ENCODE measurements at regions of chr7 and their contacts with region 1.

Region 1: DNA sequence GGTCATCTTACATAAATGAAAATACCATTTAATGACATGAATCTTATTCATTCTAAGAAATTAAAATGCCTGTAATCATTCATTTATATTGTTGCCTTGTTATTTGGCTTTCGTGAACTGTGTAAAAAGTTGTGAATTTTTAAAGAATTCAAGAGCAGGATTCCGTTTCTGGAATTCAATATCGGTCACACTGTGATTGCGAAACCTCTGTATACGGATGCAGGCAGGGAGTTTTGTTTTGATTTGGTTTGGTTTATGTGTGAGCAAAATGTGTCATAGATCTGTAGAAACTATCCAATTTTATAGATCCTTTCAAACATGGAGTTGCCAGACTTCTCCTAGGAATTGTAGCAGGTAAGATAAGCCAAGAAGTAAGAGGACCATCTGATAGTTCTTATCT is 441.4 kb downstream of the DPP6 start:
- DNase-seq: no peak
- ATAC-seq: no peak
- H3K4me3 ChIP-seq: no peak overlapping the region
- H3K27ac ChIP-seq: no peak overlapping the region
- H3K4me1 ChIP-seq: no peaks in the 10 kb centered on the region
- H3K27me3 ChIP-seq: no peaks in the 10 kb centered on the region
- CTCF ChIP-seq: no peak
- POLR2A ChIP-seq: no peak
- RAD21 ChIP-seq: no peak

Region 2: GRCh38 chr7:153858355-153858754 is 635.2 kb before region 1 on chr7:
- CTCF ChIA-PET with region 1: no interaction called
- POLR2A ChIA-PET with region 1: no interaction called
- dilution Hi-C with region 1: no loop called
- in situ Hi-C with region 1: no loop called
- intact Hi-C with region 1: no loop called
- DNase-seq: no peak
- ATAC-seq: no peak
- H3K4me3 ChIP-seq: no peak overlapping the region
- H3K27ac ChIP-seq: no peak overlapping the region
- H3K4me1 ChIP-seq: no peaks in the 10 kb centered on the region
- H3K27me3 ChIP-seq: no peaks in the 10 kb centered on the region
- CTCF ChIP-seq: no peak
- POLR2A ChIP-seq: no peak
- RAD21 ChIP-seq: no peak

Region 3: GRCh38 chr7:155252444-155252887 is 758.9 kb after region 1 on chr7:
- CTCF ChIA-PET with region 1: no interaction called
- POLR2A ChIA-PET with region 1: no interaction called
- dilution Hi-C with region 1: no loop called
- in situ Hi-C with region 1: no loop called
- intact Hi-C with region 1: no loop called
- DNase-seq: peak; percentile 13
- ATAC-seq: peak; percentile 52
- H3K4me3 ChIP-seq: no peak overlapping the region
- H3K27ac ChIP-seq: no peak overlapping the region
- H3K4me1 ChIP-seq: no peaks in the 10 kb centered on the region
- H3K27me3 ChIP-seq: no peaks in the 10 kb centered on the region; the same call in 1 of the 2 replicates
- CTCF ChIP-seq: no peak
- POLR2A ChIP-seq: no peak
- RAD21 ChIP-seq: no peak

Region 4: DNA sequence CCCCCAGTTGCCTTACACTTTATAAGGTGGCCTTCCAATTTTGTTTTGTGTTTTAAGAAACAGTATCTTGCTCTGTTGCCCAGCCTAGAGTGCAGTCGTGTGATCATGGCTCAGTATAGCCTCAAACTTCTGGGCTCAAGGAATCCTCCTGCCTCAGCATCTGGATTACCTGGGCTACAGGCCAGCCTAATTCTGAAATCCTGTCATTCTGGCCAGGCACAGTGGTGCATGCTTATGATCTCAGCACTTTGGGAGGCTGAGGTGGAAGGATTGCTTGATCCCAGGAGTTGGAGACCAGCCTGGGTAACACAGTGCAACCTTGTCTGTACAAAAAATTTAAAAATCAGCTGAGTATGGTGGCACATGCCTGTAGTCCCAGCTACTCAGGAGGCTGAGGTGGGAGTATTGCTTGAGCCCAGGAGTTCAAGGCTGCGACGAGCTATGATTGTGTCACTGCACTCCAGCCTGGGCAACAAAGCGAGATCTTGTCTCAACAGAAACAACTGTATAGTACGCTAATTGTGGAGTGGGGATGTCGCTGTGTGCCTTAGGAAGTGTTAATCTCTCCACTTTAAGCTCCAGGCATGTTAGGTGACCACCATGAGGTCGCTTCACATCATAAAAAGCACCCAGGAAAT is 1126.2 kb after region 1 on chr7:
- CTCF ChIA-PET with region 1: no interaction called
- POLR2A ChIA-PET with region 1: no interaction called
- dilution Hi-C with region 1: no loop called
- in situ Hi-C with region 1: no loop called
- intact Hi-C with region 1: loop called (anchors 5 kb)
- DNase-seq: no peak
- ATAC-seq: no peak
- H3K4me3 ChIP-seq: no peak overlapping the region
- H3K27ac ChIP-seq: no peak overlapping the region
- H3K4me1 ChIP-seq: no peaks in the 10 kb centered on the region
- H3K27me3 ChIP-seq: peaks cover 3% of the 10 kb centered on the region
- CTCF ChIP-seq: no peak
- POLR2A ChIP-seq: no peak
- RAD21 ChIP-seq: no peak

Measured in IMR-90 (cell line).